ENCODE measurements at regions of chr3 and their contacts with region 1.

Region 1: GRCh38 chr3:163785693-163786092 is 1292.6 kb downstream of the SI start:
- DNase-seq: peak; percentile 71
- ATAC-seq: peak; percentile 99
- H3K4me3 Mint-ChIP-seq: no peak overlapping the region
- H3K27ac Mint-ChIP-seq: no peak overlapping the region
- H3K4me1 Mint-ChIP-seq: peaks cover 8% of the 10 kb centered on the region
- H3K27me3 Mint-ChIP-seq: no peaks in the 10 kb centered on the region
- CTCF ChIP-seq: peak; percentile 38

Region 2: DNA sequence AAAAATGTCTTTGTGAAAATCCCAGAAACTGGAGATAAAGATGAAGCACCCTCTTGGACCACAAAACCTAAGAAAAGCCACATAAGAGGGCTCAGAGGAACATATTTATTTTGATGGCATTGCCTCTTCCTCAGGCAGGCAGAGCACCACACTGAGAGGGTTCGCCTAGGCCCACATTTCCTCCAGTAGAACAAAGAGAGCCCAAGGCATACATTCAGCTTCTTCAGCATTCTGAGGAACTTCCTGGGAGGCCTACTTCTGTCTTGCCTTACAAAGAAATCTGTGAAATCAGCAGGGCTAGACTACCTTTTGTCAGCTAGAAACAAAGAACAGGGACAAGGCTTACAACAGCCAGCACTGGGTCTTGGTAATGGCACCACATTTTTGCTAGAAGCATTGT is 32.7 kb before region 1 on chr3:
- CTCF ChIA-PET with region 1: no interaction called
- POLR2A ChIA-PET with region 1: no interaction called
- DNase-seq: no peak
- ATAC-seq: peak; percentile 77
- H3K4me3 Mint-ChIP-seq: no peak overlapping the region
- H3K27ac Mint-ChIP-seq: no peak overlapping the region
- H3K4me1 Mint-ChIP-seq: peaks cover 9% of the 10 kb centered on the region
- H3K27me3 Mint-ChIP-seq: no peaks in the 10 kb centered on the region
- CTCF ChIP-seq: no peak

Region 3: GRCh38 chr3:164004205-164004604 is 218.5 kb after region 1 on chr3:
- CTCF ChIA-PET with region 1: interaction called, 16 read pairs
- POLR2A ChIA-PET with region 1: no interaction called
- DNase-seq: peak; percentile 86
- ATAC-seq: peak; percentile 100
- H3K4me3 Mint-ChIP-seq: no peak overlapping the region
- H3K27ac Mint-ChIP-seq: no peak overlapping the region
- H3K4me1 Mint-ChIP-seq: no peaks in the 10 kb centered on the region
- H3K27me3 Mint-ChIP-seq: no peaks in the 10 kb centered on the region; the same call in 1 of the 2 replicates
- CTCF ChIP-seq: peak; percentile 43